ENCODE measurements at regions of chr11 and their contacts with region 1.

Region 1: DNA sequence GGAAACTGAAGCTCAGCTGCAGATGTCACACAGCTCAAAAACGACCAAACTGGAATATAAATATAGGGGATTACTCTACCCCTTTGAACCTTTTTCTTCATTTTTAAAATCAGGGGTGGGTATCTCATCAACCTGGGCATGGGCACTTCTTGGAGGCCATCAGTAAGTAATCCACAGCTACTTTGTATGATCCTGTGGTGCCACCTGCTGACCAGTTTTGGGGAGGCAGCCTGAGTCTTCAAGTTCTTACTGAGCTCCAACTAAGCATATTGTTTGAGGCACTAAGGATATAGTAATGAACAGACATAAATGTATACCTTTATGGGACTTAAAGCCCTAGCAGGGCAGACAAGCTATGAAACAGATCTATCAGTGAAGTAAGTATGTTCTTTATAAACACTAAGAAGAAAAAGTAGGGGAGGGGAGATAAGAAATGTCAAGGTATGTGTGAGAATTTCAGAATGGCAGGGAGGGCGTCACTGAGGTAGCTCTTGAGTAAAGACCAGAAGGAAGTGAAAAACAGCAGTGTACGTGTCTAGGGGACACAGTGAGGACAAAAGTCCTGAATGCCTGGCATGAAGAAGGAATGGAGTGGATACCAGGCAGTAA is 18.4 kb downstream of the TUB start:
- DNase-seq: peak; percentile 84
- ATAC-seq: peak; percentile 89
- H3K4me3 ChIP-seq: no peak overlapping the region
- H3K27ac ChIP-seq: no peak overlapping the region
- H3K4me1 ChIP-seq: no peaks in the 10 kb centered on the region
- H3K27me3 ChIP-seq: no peaks in the 10 kb centered on the region
- CTCF ChIP-seq: peak; percentile 95

Region 2: GRCh38 chr11:8006349-8006977 is 92.9 kb before region 1 on chr11:
- CTCF ChIA-PET with region 1: interaction called, 80 read pairs
- POLR2A ChIA-PET with region 1: no interaction called
- in situ Hi-C with region 1: no loop called
- intact Hi-C with region 1: loop called (anchors 1 kb)
- DNase-seq: peak; percentile 77
- ATAC-seq: peak; percentile 95
- H3K4me3 ChIP-seq: no peak overlapping the region
- H3K27ac ChIP-seq: no peak overlapping the region
- H3K4me1 ChIP-seq: no peaks in the 10 kb centered on the region
- H3K27me3 ChIP-seq: peaks cover 2% of the 10 kb centered on the region; the same call in 1 of the 2 replicates
- CTCF ChIP-seq: peak; percentile 98

Region 3: GRCh38 chr11:8033305-8034105 is 65.9 kb before region 1 on chr11:
- CTCF ChIA-PET with region 1: interaction called, 45 read pairs
- POLR2A ChIA-PET with region 1: no interaction called
- in situ Hi-C with region 1: no loop called
- intact Hi-C with region 1: loop called (anchors 1 kb)
- DNase-seq: peak; percentile 45
- ATAC-seq: peak; percentile 90
- H3K4me3 ChIP-seq: no peak overlapping the region
- H3K27ac ChIP-seq: no peak overlapping the region
- H3K4me1 ChIP-seq: no peaks in the 10 kb centered on the region
- H3K27me3 ChIP-seq: peaks cover 2% of the 10 kb centered on the region
- CTCF ChIP-seq: peak; percentile 99

Measured in Panc1 (cell line).